ENCODE measurements at regions of chr17 and their contacts with region 1.

Region 1: GRCh38 chr17:21318439-21318838 is 33.9 kb downstream of the MAP2K3 start:
- DNase-seq: no peak
- ATAC-seq: no peak
- H3K4me3 ChIP-seq: no peak overlapping the region
- H3K27ac ChIP-seq: no peak overlapping the region
- H3K4me1 ChIP-seq: peaks cover 0 to 8% (median 6%) of the 10 kb centered on the region in 9 donors
- H3K27me3 ChIP-seq: peaks cover 0 to 1% (median 0%) of the 10 kb centered on the region in 7 donors
- CTCF ChIP-seq: no peak

Region 2: DNA sequence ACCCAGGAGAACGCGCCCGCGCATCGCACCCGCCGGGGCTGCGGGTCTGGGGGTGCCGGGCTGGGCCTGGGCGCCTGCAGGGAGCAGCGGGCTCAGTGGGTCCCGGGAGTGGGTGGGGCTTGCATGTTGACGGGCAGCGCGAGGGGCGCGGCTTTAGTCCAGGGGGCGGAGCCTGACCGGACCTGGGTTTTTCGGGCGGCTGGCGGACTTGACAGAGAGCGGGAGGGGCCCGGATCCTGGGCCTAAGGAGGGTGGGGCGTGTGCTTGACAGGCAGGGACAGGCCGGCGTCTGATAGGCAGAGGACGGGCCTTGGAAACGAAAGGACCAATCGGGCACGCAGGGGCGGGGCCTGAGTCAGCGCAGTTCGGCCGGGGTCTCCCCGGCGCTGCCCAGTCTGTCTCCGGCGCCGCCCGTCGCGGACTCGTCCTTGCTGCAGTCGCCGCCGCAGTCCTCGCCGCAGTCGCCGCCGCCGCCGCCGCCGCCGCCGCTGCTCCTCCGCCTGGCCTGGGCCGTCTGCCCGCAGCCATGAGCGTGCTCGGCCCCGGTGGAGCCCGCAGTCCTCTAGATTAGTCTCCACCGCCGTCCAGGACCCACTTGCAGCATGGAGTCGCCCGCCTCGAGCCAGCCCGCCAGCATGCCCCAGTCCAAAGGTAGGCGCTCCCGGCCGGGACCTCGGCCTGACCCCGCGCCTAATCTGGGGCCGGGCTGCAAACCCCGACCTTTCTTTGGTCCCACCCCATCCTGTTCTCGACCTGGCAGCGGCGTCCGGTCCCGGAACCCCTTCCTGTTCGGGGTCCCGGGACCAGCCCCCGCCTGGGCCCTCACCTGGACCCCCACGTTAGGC is 33.9 kb before region 1 on chr17 and contains the start of gene MAP2K3:
- intact Hi-C with region 1: loop called in 2 of 10 experiments (anchors 2 to 5 kb)
- DNase-seq: peak; percentile 99
- ATAC-seq: peak; percentile 79 to 91 (median 86)
- H3K4me3 ChIP-seq: peak within 1 kb of the TSS; percentile 67 to 99 (median 97)
- H3K27ac ChIP-seq: peak within 1 kb of the TSS; percentile 83 to 99 (median 96)
- H3K4me1 ChIP-seq: peaks cover 35 to 71% (median 49%) of the 10 kb centered on the region in 9 donors
- H3K27me3 ChIP-seq: no peaks in the 10 kb centered on the region
- CTCF ChIP-seq: peak in 1 of 9 donors; percentile 0
- total RNA-seq, gene MAP2K3: 28.9 to 71.6 (median 60.4) TPM

Region 3: GRCh38 chr17:21376759-21377690 is 58.6 kb after region 1 on chr17:
- intact Hi-C with region 1: loop called in 3 of 10 experiments (anchors 5 to 10 kb)
- DNase-seq: peak in 1 of 2 donors; percentile 36
- ATAC-seq: peak in 7 of 8 donors; percentile 7 to 34 (median 31)
- H3K4me3 ChIP-seq: peak overlapping the region; percentile 41 to 66 (median 60)
- H3K27ac ChIP-seq: peak overlapping the region in 9 of 10 donors; percentile 40 to 68 (median 62)
- H3K4me1 ChIP-seq: peaks cover 15 to 44% (median 34%) of the 10 kb centered on the region in 9 donors
- H3K27me3 ChIP-seq: peaks cover 0 to 50% (median 5%) of the 10 kb centered on the region in 7 donors
- CTCF ChIP-seq: no peak

Region 4: GRCh38 chr17:21388066-21388465 is 69.6 kb after region 1 on chr17:
- intact Hi-C with region 1: no loop called
- DNase-seq: peak; percentile 36 to 66
- ATAC-seq: peak in 6 of 8 donors; percentile 30 to 82 (median 50)
- H3K4me3 ChIP-seq: no peak overlapping the region
- H3K27ac ChIP-seq: peak overlapping the region in 3 of 10 donors; percentile 35 to 40 (median 36)
- H3K4me1 ChIP-seq: peaks cover 1 to 17% (median 7%) of the 10 kb centered on the region in 9 donors
- H3K27me3 ChIP-seq: no peaks in the 10 kb centered on the region
- CTCF ChIP-seq: no peak

Region 5: GRCh38 chr17:21772321-21772720 is 453.9 kb after region 1 on chr17:
- intact Hi-C with region 1: loop called in 1 of 10 experiments (anchors 5 kb)
- DNase-seq: no peak
- ATAC-seq: no peak
- H3K4me3 ChIP-seq: no peak overlapping the region
- H3K27ac ChIP-seq: no peak overlapping the region
- H3K4me1 ChIP-seq: no peaks in the 10 kb centered on the region
- H3K27me3 ChIP-seq: peaks cover 0 to 7% (median 0%) of the 10 kb centered on the region in 7 donors
- CTCF ChIP-seq: no peak